ENCODE measurements at regions of chr3 and their contacts with region 1.

Region 1: GRCh38 chr3:194952841-194953241 is 267.2 kb downstream of the FAM43A start:
- DNase-seq: peak; percentile 49
- H3K4me3 ChIP-seq: no peak overlapping the region
- H3K27ac ChIP-seq: peak overlapping the region in 1 of 4 donors; percentile 53
- H3K4me1 ChIP-seq: peaks cover 0 to 7% (median 2%) of the 10 kb centered on the region in 4 donors
- H3K27me3 ChIP-seq: no peaks in the 10 kb centered on the region
- CTCF ChIP-seq: no peak
- EP300 ChIP-seq: no peak
- POLR2A ChIP-seq: no peak

Region 2: GRCh38 chr3:194691481-194692283 is 261.2 kb before region 1 on chr3:
- intact Hi-C with region 1: loop called (anchors 10 kb)
- DNase-seq: no peak
- H3K4me3 ChIP-seq: no peak overlapping the region
- H3K27ac ChIP-seq: no peak overlapping the region
- H3K4me1 ChIP-seq: peaks cover 0 to 30% (median 29%) of the 10 kb centered on the region in 4 donors
- H3K27me3 ChIP-seq: no peaks in the 10 kb centered on the region
- CTCF ChIP-seq: no peak
- EP300 ChIP-seq: no peak
- POLR2A ChIP-seq: no peak